ENCODE measurements at regions of chr11 and their contacts with region 1.

Region 1: GRCh38 chr11:78715639-78716311 is 141.1 kb upstream of the NARS2 start:
- DNase-seq: peak; percentile 56
- H3K4me3 ChIP-seq: no peak overlapping the region
- CTCF ChIP-seq: peak; percentile 84

Region 2: GRCh38 chr11:78651923-78652842 is 63.6 kb before region 1 on chr11:
- in situ Hi-C with region 1: loop called (anchors 5 kb)
- DNase-seq: no peak
- H3K4me3 ChIP-seq: no peak overlapping the region
- CTCF ChIP-seq: no peak